ENCODE measurements at regions of chr12 and their contacts with region 1.

Region 1: DNA sequence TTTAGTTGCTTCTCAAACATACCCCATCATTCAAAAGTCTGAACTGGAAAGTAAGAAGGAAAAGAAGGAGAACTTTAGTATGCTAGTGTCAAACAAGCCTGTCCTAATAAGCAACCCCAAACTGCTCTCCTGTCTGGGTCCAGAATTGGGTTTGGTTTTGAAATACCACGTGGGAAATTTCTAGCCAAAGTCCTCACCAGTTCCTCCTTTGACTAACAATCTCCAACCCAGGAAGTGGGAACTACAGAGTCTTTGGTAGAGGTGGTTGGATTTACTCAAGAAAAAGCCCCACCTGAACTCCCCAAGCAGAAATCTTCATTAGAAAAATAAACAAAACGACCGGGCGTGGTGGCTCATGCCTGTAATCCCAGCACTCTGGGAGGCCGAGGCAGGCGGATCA is 17.4 kb upstream of the EIF4B start:
- ATAC-seq: no peak
- H3K4me3 ChIP-seq: no peak overlapping the region
- H3K27ac ChIP-seq: no peak overlapping the region
- H3K4me1 ChIP-seq: no peaks in the 10 kb centered on the region

Region 2: GRCh38 chr12:52774629-52775250 is 214.2 kb before region 1 on chr12:
- in situ Hi-C with region 1: no loop called
- ATAC-seq: peak in 1 of 8 experiments; percentile 35
- H3K4me3 ChIP-seq: no peak overlapping the region
- H3K27ac ChIP-seq: no peak overlapping the region
- H3K4me1 ChIP-seq: no peaks in the 10 kb centered on the region

Region 3: DNA sequence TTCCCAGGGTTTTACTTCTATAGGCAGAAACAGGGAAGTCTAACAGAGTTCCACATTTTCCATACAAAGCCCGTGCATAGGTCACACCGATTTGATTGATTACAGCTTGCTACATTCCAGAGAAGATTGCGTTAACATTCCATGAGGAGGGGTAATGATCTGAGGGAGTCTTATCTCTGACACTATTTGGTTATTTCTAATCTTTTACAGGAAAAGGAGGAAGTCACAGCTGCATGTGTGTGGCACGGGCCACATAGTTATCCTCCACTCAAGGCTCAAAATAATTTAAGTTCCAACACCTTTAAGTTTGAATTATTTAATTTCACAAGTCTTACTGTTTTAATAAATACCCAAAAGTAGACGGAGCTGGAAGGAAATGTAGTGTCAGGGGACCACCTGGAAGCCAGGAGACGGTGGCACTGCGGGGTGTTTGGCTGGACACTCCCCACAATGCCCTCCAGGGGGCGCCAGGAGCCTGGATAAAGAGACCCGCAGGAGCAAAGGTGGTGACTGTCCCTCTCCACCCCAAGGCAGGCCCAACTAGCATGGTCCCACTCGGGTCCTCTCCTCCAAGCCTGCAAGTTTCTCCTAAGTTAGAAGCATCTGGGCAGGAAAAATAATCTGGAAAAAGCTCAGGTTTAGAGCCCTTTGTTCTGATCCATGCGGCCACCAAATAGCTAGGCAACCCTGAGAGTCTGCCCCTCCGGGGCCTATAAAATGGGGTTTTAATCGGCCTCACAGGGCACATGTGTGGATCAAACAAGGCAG is 104.2 kb before region 1 on chr12:
- in situ Hi-C with region 1: loop called in 8 of 9 experiments (anchors 5 to 10 kb)
- ATAC-seq: peak; percentile 62 to 85 (median 74)
- H3K4me3 ChIP-seq: no peak overlapping the region
- H3K27ac ChIP-seq: no peak overlapping the region
- H3K4me1 ChIP-seq: no peaks in the 10 kb centered on the region

Region 4: DNA sequence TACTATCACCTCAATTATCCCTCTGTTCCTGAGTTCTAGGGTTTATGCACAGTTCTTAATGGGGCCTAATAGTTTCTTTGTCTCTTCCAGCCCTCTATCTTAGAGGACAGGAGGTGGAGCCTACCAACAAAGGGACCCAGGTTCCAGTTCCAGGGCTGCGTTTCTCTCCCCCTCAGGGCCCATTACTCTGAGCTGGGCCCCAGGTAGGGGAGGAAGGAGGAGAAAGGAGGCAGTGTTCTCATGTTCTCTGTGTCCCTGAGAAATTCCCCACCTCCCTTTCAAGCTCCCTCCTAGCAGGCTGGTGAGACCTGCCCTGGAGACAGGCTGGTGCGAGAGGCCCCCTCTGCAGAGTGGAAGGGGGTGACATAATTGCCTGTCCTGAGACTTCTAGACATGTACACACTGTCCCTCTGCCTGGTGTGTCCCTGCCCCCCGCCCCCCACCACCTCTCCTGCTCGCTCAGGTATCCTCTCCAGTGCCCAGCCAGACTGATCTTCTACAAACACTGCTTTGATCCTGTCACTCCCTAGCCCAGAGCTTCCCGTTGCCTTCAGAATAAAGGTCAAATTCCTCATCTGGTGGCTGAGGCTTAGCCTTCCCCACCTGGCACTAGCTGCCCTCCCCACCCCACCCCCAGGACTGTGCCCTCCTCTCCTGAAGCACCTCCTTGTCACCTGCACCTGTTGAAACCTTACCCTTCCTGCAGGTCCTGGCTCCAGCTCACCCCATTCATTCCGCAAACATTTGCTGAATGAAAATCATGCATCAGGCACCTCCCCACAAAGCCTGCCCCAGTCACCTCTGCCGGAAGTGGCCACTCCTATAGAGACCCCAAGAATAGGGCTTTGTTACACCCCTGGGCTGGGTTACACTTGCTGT is 62.9 kb before region 1 on chr12:
- in situ Hi-C with region 1: no loop called
- ATAC-seq: peak in 6 of 8 experiments; percentile 35 to 48 (median 44)
- H3K4me3 ChIP-seq: no peak overlapping the region
- H3K27ac ChIP-seq: no peak overlapping the region
- H3K4me1 ChIP-seq: peaks cover 3 to 31% of the 10 kb centered on the region in 2 donors

Measured in motor neuron (in vitro differentiated cells).